ENCODE measurements at regions of chr7 and their contacts with region 1.

Region 1: DNA sequence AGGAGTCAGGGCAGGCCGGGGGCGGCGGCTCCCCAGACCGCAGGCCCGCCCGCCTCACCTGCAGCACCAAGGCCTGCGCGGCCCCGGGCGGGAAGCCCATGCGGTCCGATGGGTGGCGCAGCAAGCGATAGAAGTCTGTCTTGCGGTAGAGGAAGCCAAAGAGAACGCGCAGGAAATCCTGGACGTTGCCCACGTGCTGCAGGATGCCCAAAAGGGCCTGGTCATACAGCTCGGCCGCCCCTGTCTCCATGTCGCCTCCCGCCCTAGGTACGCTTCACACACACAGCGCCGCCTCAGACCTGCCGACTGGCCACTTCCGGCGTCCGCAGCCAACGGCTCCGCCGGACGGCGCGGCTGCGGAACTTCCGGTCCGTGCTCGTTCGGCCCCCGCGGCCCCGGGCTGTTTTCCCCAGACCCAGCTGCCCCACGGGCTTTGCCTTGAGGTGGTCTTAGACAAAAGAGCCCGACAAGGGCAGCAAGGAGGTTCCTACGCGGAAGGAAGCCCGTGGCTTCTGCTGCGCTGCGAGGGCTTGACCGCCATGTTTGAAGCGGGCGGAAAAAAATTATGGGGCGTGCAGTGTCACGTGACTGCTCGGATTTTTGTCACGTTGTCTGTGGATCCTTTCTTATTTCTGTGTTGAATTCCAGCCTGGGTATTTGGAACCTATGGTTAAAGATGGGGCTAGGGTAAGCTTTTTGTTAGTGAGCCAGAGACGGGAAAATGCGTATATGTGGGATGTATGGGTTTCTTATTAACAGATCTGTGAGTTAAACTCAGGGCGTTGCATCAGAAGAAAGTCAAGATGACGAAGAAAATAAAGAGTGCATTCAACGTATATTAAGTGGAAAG is at the start of gene NUDCD3:
- DNase-seq: peak; percentile 89
- H3K4me3 Mint-ChIP-seq: peak within 1 kb of the TSS; percentile 87
- H3K27ac Mint-ChIP-seq: peak within 1 kb of the TSS; percentile 96
- H3K4me1 Mint-ChIP-seq: peaks cover 40% of the 10 kb centered on the region
- H3K27me3 Mint-ChIP-seq: no peaks in the 10 kb centered on the region
- total RNA-seq, gene NUDCD3: 88.9 to 92.4 TPM

Region 2: GRCh38 chr7:44240983-44241510 is 249.5 kb before region 1 on chr7:
- CTCF ChIA-PET with region 1: interaction called, 16 read pairs
- POLR2A ChIA-PET with region 1: no interaction called
- intact Hi-C with region 1: no loop called
- DNase-seq: peak; percentile 77
- H3K4me3 Mint-ChIP-seq: no peak overlapping the region
- H3K27ac Mint-ChIP-seq: no peak overlapping the region
- H3K4me1 Mint-ChIP-seq: no peaks in the 10 kb centered on the region
- H3K27me3 Mint-ChIP-seq: no peaks in the 10 kb centered on the region

Region 3: GRCh38 chr7:44257618-44258422 is 232.8 kb before region 1 on chr7:
- CTCF ChIA-PET with region 1: no interaction called
- POLR2A ChIA-PET with region 1: interaction called, 10 read pairs
- intact Hi-C with region 1: loop called (anchors 2 kb)
- DNase-seq: peak; percentile 90
- H3K4me3 Mint-ChIP-seq: peak overlapping the region; percentile 52
- H3K27ac Mint-ChIP-seq: peak overlapping the region; percentile 90
- H3K4me1 Mint-ChIP-seq: peaks cover 38% of the 10 kb centered on the region
- H3K27me3 Mint-ChIP-seq: no peaks in the 10 kb centered on the region

Region 4: DNA sequence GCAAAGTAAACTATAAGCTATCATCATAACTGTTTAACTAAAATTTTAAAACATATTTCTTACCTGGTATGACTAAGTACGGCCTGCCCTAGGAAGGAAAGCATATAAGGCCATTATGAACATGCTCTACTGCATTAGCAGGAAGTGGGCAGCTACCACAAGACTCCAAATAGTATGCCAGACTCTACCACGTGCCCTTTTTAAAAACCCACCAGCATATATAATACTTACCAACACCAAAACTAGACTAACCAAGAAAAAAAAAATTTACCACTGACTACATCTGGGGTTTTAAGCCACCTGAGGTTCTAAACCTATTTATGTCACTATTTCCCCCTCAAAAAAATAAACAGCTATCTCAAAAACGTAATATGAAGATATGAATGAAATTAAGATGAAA is 30.3 kb before region 1 on chr7:
- CTCF ChIA-PET with region 1: interaction called, 14 read pairs
- POLR2A ChIA-PET with region 1: interaction called, 7 read pairs
- intact Hi-C with region 1: loop called (anchors 1 kb)
- DNase-seq: peak; percentile 74
- H3K4me3 Mint-ChIP-seq: peak overlapping the region; percentile 34
- H3K27ac Mint-ChIP-seq: peak overlapping the region; percentile 64
- H3K4me1 Mint-ChIP-seq: peaks cover 70% of the 10 kb centered on the region
- H3K27me3 Mint-ChIP-seq: no peaks in the 10 kb centered on the region

Region 5: DNA sequence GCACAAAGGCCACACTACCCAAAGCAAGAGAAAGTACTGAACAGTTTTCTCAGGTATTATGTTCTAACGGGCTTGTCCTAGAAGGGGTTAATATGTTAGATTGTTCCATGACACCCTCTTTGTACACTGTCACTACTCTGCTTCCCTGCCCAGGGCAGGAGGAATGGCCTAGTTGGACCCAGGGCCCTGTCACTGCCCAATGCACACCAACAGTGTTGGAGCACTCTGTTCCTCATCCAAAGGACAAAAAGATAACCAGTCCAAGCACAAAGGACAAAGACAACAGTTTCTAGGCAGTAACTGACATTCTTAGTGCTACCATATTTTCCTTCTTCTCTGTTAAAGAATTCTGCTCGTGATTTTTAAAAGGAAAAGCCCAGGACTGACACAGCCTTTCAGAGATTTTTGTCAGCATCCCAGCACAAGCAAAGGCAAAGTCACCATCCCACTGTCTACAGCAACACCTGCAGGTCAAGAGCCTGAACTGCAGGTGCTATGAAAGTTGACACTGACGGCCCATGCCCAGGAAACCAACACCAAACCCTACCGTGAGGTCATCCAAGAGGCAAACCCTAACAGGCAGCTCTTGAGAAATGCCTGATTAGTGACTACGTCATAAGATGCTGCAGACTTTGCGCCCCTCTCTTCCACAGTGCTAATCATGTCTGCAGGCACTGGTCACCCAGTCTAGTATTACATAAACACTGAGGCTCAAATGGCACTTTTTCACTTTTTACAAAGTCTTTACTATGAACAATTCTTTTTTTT is 13.3 kb before region 1 on chr7:
- CTCF ChIA-PET with region 1: interaction called, 10 read pairs
- POLR2A ChIA-PET with region 1: interaction called, 5 read pairs
- intact Hi-C with region 1: no loop called
- DNase-seq: peak; percentile 72
- H3K4me3 Mint-ChIP-seq: no peak overlapping the region
- H3K27ac Mint-ChIP-seq: no peak overlapping the region
- H3K4me1 Mint-ChIP-seq: peaks cover 33% of the 10 kb centered on the region
- H3K27me3 Mint-ChIP-seq: no peaks in the 10 kb centered on the region

Region 6: DNA sequence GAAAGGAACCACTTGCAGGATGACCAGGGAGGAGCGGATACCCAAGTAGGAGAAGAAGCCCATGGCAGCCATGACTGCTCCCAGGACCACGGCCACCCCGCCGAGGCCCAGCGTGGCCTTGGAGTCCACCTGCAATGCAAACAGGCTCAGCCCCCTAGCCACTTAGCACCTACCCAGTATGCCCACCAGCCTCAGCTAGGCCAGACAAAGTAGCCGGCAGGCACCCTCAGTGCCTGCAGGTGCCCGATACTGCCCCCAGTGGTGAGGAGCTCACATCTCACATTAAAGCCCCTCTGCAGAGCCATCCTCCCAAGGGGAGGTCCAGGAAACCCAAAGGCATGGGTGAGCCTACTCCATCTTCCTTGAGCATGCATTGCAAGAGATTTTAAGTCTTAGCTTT is 43.9 kb after region 1 on chr7:
- CTCF ChIA-PET with region 1: interaction called, 14 read pairs
- POLR2A ChIA-PET with region 1: interaction called, 3 read pairs
- intact Hi-C with region 1: no loop called
- DNase-seq: peak; percentile 59
- H3K4me3 Mint-ChIP-seq: no peak overlapping the region
- H3K27ac Mint-ChIP-seq: no peak overlapping the region
- H3K4me1 Mint-ChIP-seq: no peaks in the 10 kb centered on the region
- H3K27me3 Mint-ChIP-seq: no peaks in the 10 kb centered on the region

Region 7: GRCh38 chr7:44565097-44565794 is 74.7 kb after region 1 on chr7:
- CTCF ChIA-PET with region 1: interaction called, 32 read pairs
- POLR2A ChIA-PET with region 1: no interaction called
- intact Hi-C with region 1: no loop called
- DNase-seq: peak; percentile 77
- H3K4me3 Mint-ChIP-seq: no peak overlapping the region
- H3K27ac Mint-ChIP-seq: peak overlapping the region; percentile 23
- H3K4me1 Mint-ChIP-seq: peaks cover 10% of the 10 kb centered on the region
- H3K27me3 Mint-ChIP-seq: no peaks in the 10 kb centered on the region

Region 8: GRCh38 chr7:45080265-45080962 is 589.8 kb after region 1 on chr7:
- CTCF ChIA-PET with region 1: no interaction called
- POLR2A ChIA-PET with region 1: no interaction called
- intact Hi-C with region 1: no loop called
- DNase-seq: no peak
- H3K4me3 Mint-ChIP-seq: no peak overlapping the region
- H3K27ac Mint-ChIP-seq: no peak overlapping the region
- H3K4me1 Mint-ChIP-seq: no peaks in the 10 kb centered on the region
- H3K27me3 Mint-ChIP-seq: no peaks in the 10 kb centered on the region

Measured in activated CD4-positive, alpha-beta memory T cell treated with anti-CD3 and anti-CD28 coated beads for 36 hours (primary cell).